ENCODE measurements at regions of chr5 and their contacts with region 1.

Region 1: GRCh38 chr5:141657937-141658545 is 6.8 kb upstream of the FCHSD1 start:
- DNase-seq: peak; percentile 65
- H3K4me3 ChIP-seq: no peak overlapping the region
- H3K27me3 ChIP-seq: no peaks in the 10 kb centered on the region
- CTCF ChIP-seq: no peak

Region 2: DNA sequence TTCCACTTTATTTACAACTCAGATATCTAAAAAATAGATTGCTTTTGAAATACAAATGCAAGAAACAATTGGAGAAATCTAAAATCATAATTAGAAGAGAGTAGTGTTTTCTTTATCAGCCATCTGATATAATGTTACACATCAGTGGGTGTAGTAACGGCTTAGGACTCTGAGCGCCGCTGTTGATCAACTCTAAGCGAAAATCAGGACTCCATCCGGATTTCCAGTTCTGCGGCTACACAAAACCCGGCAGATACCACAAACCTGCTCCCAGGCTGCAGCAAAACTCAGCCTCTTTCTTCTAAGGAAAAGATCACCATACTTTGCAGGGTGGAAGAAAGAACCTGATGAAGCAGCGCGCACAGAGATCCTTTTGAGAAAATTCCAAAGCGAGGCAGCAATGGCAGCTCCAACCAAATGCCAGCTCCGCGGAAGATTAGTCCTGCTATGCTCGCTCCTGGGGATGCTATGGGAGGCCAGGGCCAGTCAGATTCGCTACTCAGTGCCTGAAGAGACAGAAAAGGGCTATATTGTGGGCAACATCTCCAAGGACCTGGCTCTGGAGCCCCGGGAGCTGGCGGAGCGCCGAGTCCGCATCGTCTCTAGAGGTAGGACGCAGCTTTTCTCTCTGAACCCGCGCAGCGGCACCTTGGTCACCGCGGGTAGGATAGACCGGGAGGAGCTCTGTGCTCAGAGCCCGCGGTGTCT is 255.3 kb before region 1 on chr5 and contains the start of gene PCDHGA9:
- CTCF ChIA-PET with region 1: no interaction called
- POLR2A ChIA-PET with region 1: no interaction called
- DNase-seq: no peak
- H3K4me3 ChIP-seq: no peak within 1 kb of the TSS
- H3K27me3 ChIP-seq: no peaks in the 10 kb centered on the region
- CTCF ChIP-seq: peak; percentile 35; the same call in 1 of the 2 replicates
- polyA plus RNA-seq, gene PCDHGA9: 0.97 and 1.2 TPM in 2 replicates

Region 3: DNA sequence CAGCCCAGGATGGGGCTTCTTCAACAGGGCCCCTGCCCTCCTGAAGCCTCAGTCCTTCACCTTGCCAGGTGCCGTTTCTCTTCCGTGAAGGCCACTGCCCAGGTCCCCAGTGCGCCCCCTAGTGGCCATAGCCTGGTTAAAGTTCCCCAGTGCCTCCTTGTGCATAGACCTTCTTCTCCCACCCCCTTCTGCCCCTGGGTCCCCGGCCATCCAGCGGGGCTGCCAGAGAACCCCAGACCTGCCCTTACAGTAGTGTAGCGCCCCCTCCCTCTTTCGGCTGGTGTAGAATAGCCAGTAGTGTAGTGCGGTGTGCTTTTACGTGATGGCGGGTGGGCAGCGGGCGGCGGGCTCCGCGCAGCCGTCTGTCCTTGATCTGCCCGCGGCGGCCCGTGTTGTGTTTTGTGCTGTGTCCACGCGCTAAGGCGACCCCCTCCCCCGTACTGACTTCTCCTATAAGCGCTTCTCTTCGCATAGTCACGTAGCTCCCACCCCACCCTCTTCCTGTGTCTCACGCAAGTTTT is 145.6 kb before region 1 on chr5:
- CTCF ChIA-PET with region 1: no interaction called
- POLR2A ChIA-PET with region 1: no interaction called
- DNase-seq: no peak
- H3K4me3 ChIP-seq: peak overlapping the region; percentile 39
- H3K27me3 ChIP-seq: no peaks in the 10 kb centered on the region
- CTCF ChIP-seq: peak; percentile 90

Region 4: GRCh38 chr5:141672848-141673813 is 15.1 kb after region 1 on chr5:
- CTCF ChIA-PET with region 1: interaction called, 19 read pairs
- POLR2A ChIA-PET with region 1: no interaction called
- DNase-seq: no peak
- H3K4me3 ChIP-seq: no peak overlapping the region
- H3K27me3 ChIP-seq: no peaks in the 10 kb centered on the region
- CTCF ChIP-seq: no peak